CD4-positive, alpha-beta memory T cell (primary cell): ENCODE measurements at regions of chr5 and their contacts with region 1.

Region 1: GRCh38 chr5:132410451-132411381 is 41.2 kb downstream of the SLC22A5 start:
- DNase-seq: peak; percentile 84 to 91 (median 86)
- H3K4me3 ChIP-seq: peak overlapping the region; percentile 86 to 95
- H3K4me3 Mint-ChIP-seq: peak overlapping the region; percentile 91 to 99 (median 99)
- H3K27ac ChIP-seq: peak overlapping the region; percentile 99
- H3K27ac Mint-ChIP-seq: peak overlapping the region; percentile 99 to 100 (median 99)
- H3K4me1 ChIP-seq: peaks cover 78% of the 10 kb centered on the region
- H3K4me1 Mint-ChIP-seq: peaks cover 61 to 92% (median 75%) of the 10 kb centered on the region in 4 donors
- H3K27me3 ChIP-seq: no peaks in the 10 kb centered on the region
- H3K27me3 Mint-ChIP-seq: no peaks in the 10 kb centered on the region

Region 2: DNA sequence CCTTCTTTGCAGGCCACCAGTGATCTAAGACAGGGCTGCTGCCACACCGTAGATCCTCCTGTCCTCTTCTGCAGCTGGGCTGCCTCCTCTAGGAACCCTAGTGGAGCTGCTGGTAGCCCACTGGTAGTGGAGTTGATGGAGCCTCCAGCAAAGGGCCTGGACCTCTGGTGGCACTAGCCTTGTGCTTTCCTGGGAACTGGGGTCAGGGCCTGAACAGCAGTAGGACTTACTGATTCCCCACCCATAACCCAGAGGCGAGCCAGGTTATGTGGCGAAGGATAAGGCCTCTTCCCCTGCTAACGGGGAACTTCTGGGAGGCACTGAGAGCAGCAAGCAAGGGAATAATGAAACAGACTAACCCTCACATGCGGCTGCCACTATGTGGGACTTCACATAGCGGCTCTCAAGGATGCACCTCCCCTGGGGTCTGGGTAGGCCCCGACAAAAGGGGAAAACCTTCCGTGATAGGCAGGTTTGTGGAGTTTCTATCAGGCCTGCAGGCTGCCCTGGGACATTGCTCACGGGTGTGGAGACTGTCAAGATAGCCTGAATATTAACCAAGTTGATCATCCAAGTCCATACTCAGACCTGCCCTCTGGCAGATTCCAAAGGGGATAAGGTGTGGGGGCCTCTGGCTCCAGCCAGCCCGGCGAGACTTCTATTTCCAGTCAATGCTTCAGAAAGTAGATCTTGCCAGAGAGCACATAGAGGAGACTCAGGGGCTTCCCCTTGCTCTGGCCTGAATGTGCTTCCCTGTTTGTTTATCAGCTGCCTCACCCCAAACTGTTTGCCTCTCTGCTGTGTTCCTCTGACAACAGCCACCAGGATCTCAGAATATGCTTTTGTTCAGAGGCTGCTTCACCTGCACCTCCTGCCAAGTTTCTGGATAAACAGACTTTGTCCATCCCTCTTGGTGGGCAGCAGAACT is 109.1 kb before region 1 on chr5:
- CTCF ChIA-PET with region 1: no interaction called
- POLR2A ChIA-PET with region 1: no interaction called
- intact Hi-C with region 1: no loop called
- DNase-seq: no peak
- H3K4me3 ChIP-seq: no peak overlapping the region
- H3K4me3 Mint-ChIP-seq: no peak overlapping the region
- H3K27ac ChIP-seq: no peak overlapping the region
- H3K27ac Mint-ChIP-seq: no peak overlapping the region
- H3K4me1 ChIP-seq: no peaks in the 10 kb centered on the region
- H3K4me1 Mint-ChIP-seq: no peaks in the 10 kb centered on the region
- H3K27me3 ChIP-seq: no peaks in the 10 kb centered on the region
- H3K27me3 Mint-ChIP-seq: peaks cover 5 to 7% of the 10 kb centered on the region in 2 donors

Region 3: DNA sequence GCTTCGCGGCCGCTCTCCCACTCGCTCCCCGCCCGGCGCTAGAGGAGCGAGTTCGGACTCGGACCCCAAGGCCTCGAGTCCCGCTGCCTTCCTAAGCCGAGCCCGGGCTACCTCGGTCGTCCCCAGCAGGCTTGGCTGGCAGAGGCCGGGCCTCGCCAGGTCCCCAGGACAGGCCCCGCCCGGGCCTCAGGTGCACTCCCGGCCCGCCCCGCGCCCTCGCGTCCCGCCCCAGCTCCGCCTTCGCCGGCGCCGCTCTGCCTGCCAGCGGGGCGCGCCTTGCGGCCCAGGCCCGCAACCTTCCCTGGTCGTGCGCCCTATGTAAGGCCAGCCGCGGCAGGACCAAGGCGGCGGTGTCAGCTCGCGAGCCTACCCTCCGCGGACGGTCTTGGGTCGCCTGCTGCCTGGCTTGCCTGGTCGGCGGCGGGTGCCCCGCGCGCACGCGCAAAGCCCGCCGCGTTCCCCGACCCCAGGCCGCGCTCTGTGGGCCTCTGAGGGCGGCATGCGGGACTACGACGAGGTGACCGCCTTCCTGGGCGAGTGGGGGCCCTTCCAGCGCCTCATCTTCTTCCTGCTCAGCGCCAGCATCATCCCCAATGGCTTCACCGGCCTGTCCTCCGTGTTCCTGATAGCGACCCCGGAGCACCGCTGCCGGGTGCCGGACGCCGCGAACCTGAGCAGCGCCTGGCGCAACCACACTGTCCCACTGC is 41.1 kb before region 1 on chr5 and contains the start of gene SLC22A5:
- CTCF ChIA-PET with region 1: no interaction called
- POLR2A ChIA-PET with region 1: interaction called, 12 read pairs
- intact Hi-C with region 1: no loop called
- DNase-seq: peak; percentile 67 to 77 (median 72)
- H3K4me3 ChIP-seq: peak within 1 kb of the TSS; percentile 20 to 72
- H3K4me3 Mint-ChIP-seq: peak within 1 kb of the TSS; percentile 83 to 91 (median 87)
- H3K27ac ChIP-seq: peak within 1 kb of the TSS; percentile 74
- H3K27ac Mint-ChIP-seq: peak within 1 kb of the TSS; percentile 70 to 93 (median 88)
- H3K4me1 ChIP-seq: peaks cover 31% of the 10 kb centered on the region
- H3K4me1 Mint-ChIP-seq: peaks cover 13 to 32% (median 26%) of the 10 kb centered on the region in 4 donors
- H3K27me3 ChIP-seq: no peaks in the 10 kb centered on the region
- H3K27me3 Mint-ChIP-seq: no peaks in the 10 kb centered on the region
- total RNA-seq, gene SLC22A5: 8.9 to 10.0 TPM

Region 4: GRCh38 chr5:132394667-132395259 is 16.0 kb before region 1 on chr5:
- CTCF ChIA-PET with region 1: interaction called, 5 read pairs
- POLR2A ChIA-PET with region 1: interaction called, 48 read pairs
- intact Hi-C with region 1: loop called (anchors 2 kb)
- DNase-seq: no peak
- H3K4me3 ChIP-seq: no peak overlapping the region
- H3K4me3 Mint-ChIP-seq: peak overlapping the region in 4 of 8 donors; percentile 2 to 65 (median 59)
- H3K27ac ChIP-seq: no peak overlapping the region
- H3K27ac Mint-ChIP-seq: peak overlapping the region; percentile 50 to 92 (median 77)
- H3K4me1 ChIP-seq: peaks cover 70% of the 10 kb centered on the region
- H3K4me1 Mint-ChIP-seq: peaks cover 53 to 97% (median 72%) of the 10 kb centered on the region in 4 donors
- H3K27me3 ChIP-seq: no peaks in the 10 kb centered on the region
- H3K27me3 Mint-ChIP-seq: no peaks in the 10 kb centered on the region

Region 5: DNA sequence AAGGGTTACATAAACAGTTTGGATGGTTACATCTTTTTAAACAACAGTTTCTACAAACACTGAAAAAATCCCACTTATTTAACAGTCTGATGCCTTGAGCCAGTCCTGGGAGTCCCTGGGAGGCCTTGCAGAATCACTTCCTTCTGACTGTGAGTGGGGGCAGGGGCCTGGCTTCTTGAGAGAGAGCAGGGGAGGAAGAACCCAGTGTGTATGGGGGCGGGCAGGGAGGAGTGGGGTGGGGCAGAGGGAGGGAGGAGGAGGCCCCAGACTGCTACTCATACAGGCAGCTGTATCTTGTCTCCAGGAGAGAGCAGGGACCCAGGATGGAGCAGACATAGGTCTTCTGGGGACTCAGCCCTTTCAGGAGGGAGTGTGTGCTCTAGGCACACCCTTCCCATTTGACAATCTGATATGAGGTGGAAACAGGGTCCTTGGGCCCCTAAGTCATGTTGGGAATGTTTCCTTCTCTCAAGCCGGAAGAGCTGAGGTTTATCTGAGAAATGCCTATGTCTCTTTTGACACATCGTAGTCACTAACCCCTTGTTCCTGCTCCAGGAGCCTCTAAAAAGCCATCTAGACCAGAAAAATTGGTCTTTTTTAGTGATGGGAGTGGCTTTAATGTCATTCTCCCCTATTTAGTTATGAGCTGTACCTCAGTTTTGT is 27.0 kb after region 1 on chr5:
- CTCF ChIA-PET with region 1: interaction called, 4 read pairs
- POLR2A ChIA-PET with region 1: interaction called, 75 read pairs
- intact Hi-C with region 1: no loop called
- DNase-seq: peak; percentile 49 to 75 (median 52)
- H3K4me3 ChIP-seq: peak overlapping the region; percentile 4 to 8
- H3K4me3 Mint-ChIP-seq: peak overlapping the region; percentile 52 to 85 (median 70)
- H3K27ac ChIP-seq: peak overlapping the region; percentile 60
- H3K27ac Mint-ChIP-seq: peak overlapping the region; percentile 89 to 96 (median 92)
- H3K4me1 ChIP-seq: peaks cover 99% of the 10 kb centered on the region
- H3K4me1 Mint-ChIP-seq: peaks cover 64 to 97% (median 83%) of the 10 kb centered on the region in 4 donors
- H3K27me3 ChIP-seq: no peaks in the 10 kb centered on the region
- H3K27me3 Mint-ChIP-seq: no peaks in the 10 kb centered on the region

Region 6: DNA sequence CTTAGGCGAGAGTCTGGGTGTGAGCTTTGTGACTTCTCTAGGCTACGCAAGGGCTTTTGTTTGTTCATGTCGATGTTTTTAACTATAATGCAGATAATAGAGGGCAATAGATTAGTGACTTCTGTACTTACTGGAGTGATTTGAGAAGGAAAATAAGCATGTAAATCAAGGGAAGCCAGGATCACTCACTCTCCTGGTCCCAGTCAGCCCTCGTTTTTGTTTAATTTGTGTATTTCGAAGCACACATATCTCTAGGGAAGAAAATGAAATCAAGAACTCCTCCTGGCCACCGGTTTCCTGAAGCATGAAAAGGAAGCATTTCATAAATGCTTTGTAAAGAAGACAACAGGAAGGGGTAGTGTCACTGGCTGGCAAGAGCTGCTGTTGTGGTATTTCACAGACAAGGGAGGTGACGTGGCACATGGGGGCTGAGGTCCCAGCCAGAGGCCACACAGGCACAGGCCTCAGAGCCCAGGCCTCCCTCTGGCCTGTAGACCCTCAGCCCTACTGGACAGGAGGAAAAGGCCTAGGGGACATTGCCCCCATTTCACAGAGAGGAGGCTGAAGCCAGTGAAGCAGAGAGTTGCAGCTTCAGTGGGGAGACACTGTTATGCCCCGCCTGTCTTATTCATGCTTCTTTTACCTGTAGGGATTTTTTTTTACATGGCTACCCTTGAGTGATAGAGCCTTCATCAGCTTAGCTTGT is 45.7 kb after region 1 on chr5:
- CTCF ChIA-PET with region 1: interaction called, 28 read pairs
- POLR2A ChIA-PET with region 1: interaction called, 133 read pairs
- intact Hi-C with region 1: loop called (anchors 5 kb)
- DNase-seq: peak; percentile 76 to 87 (median 79)
- H3K4me3 ChIP-seq: peak overlapping the region; percentile 41 to 48
- H3K4me3 Mint-ChIP-seq: peak overlapping the region; percentile 73 to 89 (median 82)
- H3K27ac ChIP-seq: peak overlapping the region; percentile 77
- H3K27ac Mint-ChIP-seq: peak overlapping the region; percentile 97 to 100 (median 100)
- H3K4me1 ChIP-seq: peaks cover 100% of the 10 kb centered on the region
- H3K4me1 Mint-ChIP-seq: peaks cover 82 to 95% (median 90%) of the 10 kb centered on the region in 4 donors
- H3K27me3 ChIP-seq: no peaks in the 10 kb centered on the region
- H3K27me3 Mint-ChIP-seq: no peaks in the 10 kb centered on the region

Region 7: GRCh38 chr5:132473019-132473531 is 62.4 kb after region 1 on chr5:
- CTCF ChIA-PET with region 1: interaction called, 28 read pairs
- POLR2A ChIA-PET with region 1: interaction called, 110 read pairs
- intact Hi-C with region 1: no loop called
- DNase-seq: peak; percentile 90 to 96 (median 95)
- H3K4me3 ChIP-seq: no peak overlapping the region
- H3K4me3 Mint-ChIP-seq: peak overlapping the region; percentile 27 to 86 (median 68)
- H3K27ac ChIP-seq: peak overlapping the region; percentile 65
- H3K27ac Mint-ChIP-seq: peak overlapping the region; percentile 91 to 99 (median 97)
- H3K4me1 ChIP-seq: peaks cover 97% of the 10 kb centered on the region
- H3K4me1 Mint-ChIP-seq: peaks cover 60 to 96% (median 79%) of the 10 kb centered on the region in 4 donors
- H3K27me3 ChIP-seq: no peaks in the 10 kb centered on the region
- H3K27me3 Mint-ChIP-seq: peaks cover 0 to 5% of the 10 kb centered on the region in 2 donors

Region 8: DNA sequence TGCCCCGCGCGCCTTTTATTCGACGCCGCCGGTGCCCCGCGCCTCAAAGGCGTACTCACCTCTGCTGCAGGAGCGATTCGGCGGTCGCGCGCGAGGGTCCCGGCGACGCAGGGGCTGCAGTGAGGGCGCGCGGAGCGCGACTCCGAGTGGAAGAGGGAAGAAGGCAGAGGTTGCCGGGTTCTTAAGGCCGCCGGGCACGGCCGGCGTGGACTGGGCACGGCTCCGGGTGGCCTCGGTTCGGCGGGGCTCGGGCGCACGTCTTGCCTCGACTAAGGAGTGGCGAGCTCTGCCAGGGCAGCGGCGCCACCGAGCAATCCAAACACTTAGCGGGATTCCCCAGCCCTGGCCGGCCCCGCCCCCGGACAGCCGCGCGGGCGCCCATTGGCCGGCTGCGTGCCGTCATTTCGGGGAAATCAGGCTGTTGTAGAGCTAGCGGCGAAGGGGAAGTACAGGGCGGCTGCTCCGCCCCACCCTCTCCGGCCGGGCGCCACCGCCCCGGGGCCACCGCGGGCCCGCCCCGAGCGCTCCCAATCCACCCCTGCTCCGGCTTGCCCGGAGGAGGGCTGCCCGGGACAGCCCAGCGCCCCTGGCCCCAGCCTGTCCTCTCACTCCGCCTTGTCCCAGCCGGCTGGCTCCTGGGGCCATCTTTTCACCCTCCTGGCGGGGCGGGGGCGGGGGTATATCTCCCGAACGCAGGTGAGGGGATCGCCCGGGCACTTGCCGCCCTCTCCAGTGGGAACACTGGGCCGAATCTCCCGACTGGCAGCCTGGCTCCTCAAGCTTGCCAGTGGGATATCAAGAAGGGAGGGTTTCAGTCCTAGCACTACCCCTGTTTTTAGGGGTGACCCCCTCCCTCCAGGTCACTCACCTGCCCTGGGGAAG is 80.0 kb after region 1 on chr5 and contains the start of gene IRF1:
- CTCF ChIA-PET with region 1: interaction called, 141 read pairs
- POLR2A ChIA-PET with region 1: interaction called, 592 read pairs
- intact Hi-C with region 1: loop called (anchors 1 kb)
- DNase-seq: peak; percentile 97 to 99 (median 99)
- H3K4me3 ChIP-seq: peak within 1 kb of the TSS; percentile 94 to 96
- H3K4me3 Mint-ChIP-seq: peak within 1 kb of the TSS; percentile 94 to 97 (median 96)
- H3K27ac ChIP-seq: peak within 1 kb of the TSS; percentile 99
- H3K27ac Mint-ChIP-seq: peak within 1 kb of the TSS; percentile 93 to 99 (median 99)
- H3K4me1 ChIP-seq: peaks cover 79% of the 10 kb centered on the region
- H3K4me1 Mint-ChIP-seq: peaks cover 46 to 83% (median 61%) of the 10 kb centered on the region in 4 donors
- H3K27me3 ChIP-seq: no peaks in the 10 kb centered on the region
- H3K27me3 Mint-ChIP-seq: no peaks in the 10 kb centered on the region
- total RNA-seq, gene IRF1: 192 to 202 TPM